Cardiac septum (tissue), 1 donor: ENCODE measurements at regions of chr14 and their contacts with region 1.

Region 1: GRCh38 chr14:56117765-56118610 is at the start of gene PELI2:
- DNase-seq: peak; percentile 89
- total RNA-seq, gene PELI2: 3.4 TPM

Region 2: DNA sequence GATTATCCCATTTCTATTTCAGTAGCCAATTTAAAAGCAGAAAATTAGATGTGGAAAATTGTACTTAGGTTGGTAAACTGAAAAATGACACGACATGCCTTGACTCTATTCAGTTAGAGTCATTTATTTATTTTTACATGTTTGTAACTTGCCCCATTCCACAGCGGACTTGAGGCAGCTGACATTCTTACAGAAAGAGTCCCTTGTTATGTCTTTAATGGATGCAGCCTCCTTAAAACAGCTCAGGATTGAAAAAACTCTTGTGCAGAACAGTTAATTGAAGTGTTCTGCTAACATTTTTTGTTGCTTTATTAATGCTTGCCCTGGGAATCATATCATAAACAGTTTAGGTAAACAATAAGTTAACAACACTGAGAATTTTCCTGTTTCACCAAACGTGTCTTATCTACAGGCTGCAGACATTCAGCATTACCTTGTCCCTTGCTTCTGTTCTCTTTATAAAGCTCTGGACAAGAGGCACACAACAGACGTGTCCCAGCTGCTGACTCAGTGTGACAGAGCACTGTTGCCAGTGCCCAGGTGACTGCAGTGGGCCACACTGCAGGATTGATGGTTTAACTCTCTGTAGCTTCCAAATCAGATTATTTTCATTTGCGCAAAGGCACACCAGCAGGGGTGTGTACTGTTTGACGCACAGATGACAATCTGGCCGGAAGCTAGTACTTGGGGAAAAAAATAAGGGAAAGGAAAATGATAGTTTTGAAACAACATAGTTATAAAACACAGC is 101.9 kb after region 1 on chr14:
- intact Hi-C with region 1: loop called (anchors 5 kb)
- DNase-seq: no peak